Aorta (tissue), 5 donors: ENCODE measurements at regions of chr11 and their contacts with region 1.

Region 1: DNA sequence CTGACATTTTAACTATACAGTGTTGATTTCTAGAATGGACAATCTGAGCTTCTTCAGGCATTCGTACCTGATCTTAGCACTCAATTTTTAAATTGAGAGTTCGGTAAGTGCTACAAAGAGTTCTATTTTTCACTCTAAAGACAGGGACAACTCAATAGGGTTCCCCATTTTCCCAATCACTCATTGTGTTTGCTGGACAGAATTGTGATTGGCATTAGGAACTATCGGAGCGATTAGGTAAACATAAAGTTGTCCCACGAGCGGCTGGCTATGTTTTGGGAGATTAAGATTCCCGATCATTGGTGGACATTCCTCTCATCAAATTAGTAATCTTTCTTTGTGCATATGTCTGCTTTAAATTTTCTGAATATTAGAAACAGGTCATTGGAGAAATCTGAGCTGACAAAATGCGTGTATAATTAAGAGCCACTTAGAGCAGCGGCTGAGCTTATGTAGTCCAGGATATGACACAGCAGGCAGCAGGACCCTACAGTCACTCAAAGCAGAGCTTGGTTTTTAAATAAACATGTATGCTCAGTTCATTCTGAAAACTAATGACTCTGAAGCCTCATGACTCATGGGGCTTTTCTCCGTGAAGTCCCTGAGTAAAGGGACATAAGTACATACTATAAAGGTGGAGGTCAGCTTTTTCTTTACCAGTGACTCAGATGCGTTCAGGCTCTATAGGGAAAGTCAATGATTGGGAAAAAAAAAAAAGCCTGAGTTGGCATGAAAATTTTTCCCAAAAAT is 109.4 kb downstream of the GRIA4 start:
- DNase-seq: no peak
- ATAC-seq: no peak
- H3K4me3 ChIP-seq: no peak overlapping the region
- H3K27ac ChIP-seq: no peak overlapping the region
- H3K4me1 ChIP-seq: no peaks in the 10 kb centered on the region
- H3K27me3 ChIP-seq: no peaks in the 10 kb centered on the region

Region 2: DNA sequence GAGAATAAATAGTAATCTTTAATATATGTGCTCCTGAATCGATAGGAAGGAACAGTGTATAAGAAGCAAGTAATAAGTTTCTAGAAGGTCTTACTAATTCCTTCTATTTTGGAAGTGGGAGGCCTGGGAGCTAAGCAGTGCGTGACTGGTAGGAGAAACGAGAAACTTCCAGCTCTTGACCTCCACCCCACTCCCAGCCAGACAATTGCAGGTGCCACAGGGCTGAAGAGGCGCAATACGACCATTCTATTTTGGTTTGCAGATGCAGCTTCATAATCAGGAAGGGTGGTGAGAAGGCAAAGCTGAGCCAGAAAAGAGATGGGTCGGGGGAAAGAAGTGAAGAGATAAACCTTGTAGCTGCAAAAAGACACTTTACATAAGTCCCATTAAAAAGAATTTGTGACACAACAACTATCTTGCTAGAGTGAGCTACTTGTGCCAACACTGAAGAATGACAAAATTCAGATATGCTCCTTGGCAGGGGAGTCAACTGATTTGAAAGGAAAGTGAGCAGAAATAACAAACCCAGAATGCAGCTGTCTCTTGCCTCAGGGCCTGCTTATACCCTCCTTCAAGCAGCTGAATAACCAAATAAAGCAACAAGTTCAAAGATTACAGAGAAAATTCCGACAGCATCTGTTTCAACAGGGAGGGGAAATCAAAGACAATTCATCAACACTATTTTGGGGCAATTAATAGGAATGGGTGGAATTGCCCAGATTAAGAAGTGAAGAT is 74.2 kb before region 1 on chr11:
- intact Hi-C with region 1: loop called in 1 of 2 experiments (anchors 10 kb)
- DNase-seq: no peak
- ATAC-seq: no peak
- H3K4me3 ChIP-seq: no peak overlapping the region
- H3K27ac ChIP-seq: no peak overlapping the region
- H3K4me1 ChIP-seq: no peaks in the 10 kb centered on the region
- H3K27me3 ChIP-seq: no peaks in the 10 kb centered on the region

Region 3: GRCh38 chr11:105665281-105665680 is 54.0 kb before region 1 on chr11:
- intact Hi-C with region 1: no loop called
- DNase-seq: no peak
- ATAC-seq: no peak
- H3K4me3 ChIP-seq: no peak overlapping the region
- H3K27ac ChIP-seq: no peak overlapping the region
- H3K4me1 ChIP-seq: no peaks in the 10 kb centered on the region
- H3K27me3 ChIP-seq: no peaks in the 10 kb centered on the region